ENCODE measurements at regions of chr19 and their contacts with region 1.

Region 1: GRCh38 chr19:52171321-52172169 is at the start of gene ZNF836:
- DNase-seq: peak; percentile 94
- ATAC-seq: peak; percentile 96
- H3K4me3 Mint-ChIP-seq: peak within 1 kb of the TSS; percentile 92
- H3K27ac Mint-ChIP-seq: peak within 1 kb of the TSS; percentile 96
- H3K4me1 Mint-ChIP-seq: peaks cover 29% of the 10 kb centered on the region
- H3K27me3 Mint-ChIP-seq: no peaks in the 10 kb centered on the region
- CTCF ChIP-seq: no peak
- total RNA-seq, gene ZNF836: 10.3 to 12.6 TPM

Region 2: DNA sequence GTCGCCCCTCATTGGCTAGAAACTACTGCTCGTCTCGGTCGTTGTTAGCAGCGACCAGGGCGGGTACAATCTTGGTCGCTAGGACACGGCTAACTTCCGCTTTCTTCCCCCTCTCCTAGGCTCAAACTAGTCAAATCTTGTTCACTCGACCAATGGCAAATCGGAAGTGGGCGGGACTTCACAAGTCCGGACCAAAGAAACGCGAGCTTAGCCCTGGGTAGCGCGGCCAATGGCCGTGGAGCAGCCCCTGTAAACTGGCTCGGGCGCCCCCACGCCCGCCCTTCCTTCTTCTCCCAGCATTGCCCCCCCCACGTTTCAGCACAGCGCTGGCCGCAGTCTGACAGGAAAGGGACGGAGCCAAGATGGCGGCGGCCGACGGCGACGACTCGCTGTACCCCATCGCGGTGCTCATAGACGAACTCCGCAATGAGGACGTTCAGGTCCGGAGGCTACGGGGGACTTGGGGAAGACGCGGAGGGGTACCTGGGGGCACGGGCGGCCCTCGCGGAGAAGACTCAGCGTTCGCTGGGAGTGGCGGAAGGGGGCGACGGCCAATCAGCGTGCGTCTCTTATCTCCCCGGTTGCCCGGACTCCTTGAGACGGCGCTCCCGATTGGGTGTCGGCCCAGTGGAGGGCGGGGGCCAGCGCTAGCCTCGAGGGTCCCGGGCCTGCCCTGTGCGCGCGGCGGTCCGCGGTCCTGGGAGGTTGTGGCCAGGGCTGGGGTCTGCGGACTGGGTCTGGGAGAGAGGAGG is 18.4 kb after region 1 on chr19 and contains the start of gene PPP2R1A:
- CTCF ChIA-PET with region 1: interaction called, 3 read pairs
- POLR2A ChIA-PET with region 1: interaction called, 16 read pairs
- intact Hi-C with region 1: no loop called
- DNase-seq: peak; percentile 99
- ATAC-seq: peak; percentile 92
- H3K4me3 Mint-ChIP-seq: peak within 1 kb of the TSS; percentile 93
- H3K27ac Mint-ChIP-seq: peak within 1 kb of the TSS; percentile 98
- H3K4me1 Mint-ChIP-seq: peaks cover 41% of the 10 kb centered on the region
- H3K27me3 Mint-ChIP-seq: no peaks in the 10 kb centered on the region
- CTCF ChIP-seq: no peak
- total RNA-seq, gene PPP2R1A: 236 to 237 TPM

Measured in activated CD8-positive, alpha-beta T cell treated with anti-CD3 and anti-CD28 coated beads for 36 hours (primary cell).